ENCODE measurements at regions of chr3 and their contacts with region 1.

Region 1: DNA sequence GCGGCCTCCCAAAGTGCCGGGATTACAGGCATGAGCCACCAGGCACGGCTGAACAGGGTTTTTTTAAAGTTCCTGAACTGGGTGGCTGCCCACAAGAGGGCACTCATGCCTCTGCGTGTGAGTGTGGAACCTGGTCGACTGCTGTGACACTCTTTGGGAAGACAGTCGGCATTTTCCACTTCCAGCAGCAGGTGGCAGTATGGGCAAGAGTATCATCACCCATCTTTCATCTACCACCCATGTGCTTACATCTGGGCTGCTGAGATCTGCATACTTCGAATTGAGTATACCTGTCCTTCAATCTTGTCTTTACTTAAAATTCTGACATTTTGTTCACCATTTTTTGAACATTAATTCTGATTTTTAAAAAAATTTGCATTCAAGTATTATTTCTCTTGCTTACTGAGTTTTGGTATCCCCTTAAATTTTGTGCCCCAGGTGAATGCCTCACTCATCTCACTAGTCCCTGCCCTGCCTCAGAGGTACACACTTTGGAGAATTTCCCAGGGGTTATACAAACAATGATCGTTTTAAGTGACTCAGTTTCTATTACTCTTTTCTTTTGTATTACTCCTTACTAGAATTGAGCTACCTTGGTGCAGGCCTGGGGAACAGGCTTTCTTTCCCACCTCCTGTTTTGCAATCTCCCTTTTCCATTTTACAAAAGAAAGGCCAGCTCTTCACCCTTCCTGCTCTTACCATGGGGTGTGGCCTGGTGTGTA is 11.8 kb downstream of the CLEC3B start:
- DNase-seq: peak; percentile 96
- ATAC-seq: peak; percentile 82
- H3K4me3 Mint-ChIP-seq: no peak overlapping the region
- H3K27ac Mint-ChIP-seq: no peak overlapping the region
- H3K4me1 Mint-ChIP-seq: peaks cover 60% of the 10 kb centered on the region
- H3K27me3 Mint-ChIP-seq: peaks cover 7% of the 10 kb centered on the region

Region 2: DNA sequence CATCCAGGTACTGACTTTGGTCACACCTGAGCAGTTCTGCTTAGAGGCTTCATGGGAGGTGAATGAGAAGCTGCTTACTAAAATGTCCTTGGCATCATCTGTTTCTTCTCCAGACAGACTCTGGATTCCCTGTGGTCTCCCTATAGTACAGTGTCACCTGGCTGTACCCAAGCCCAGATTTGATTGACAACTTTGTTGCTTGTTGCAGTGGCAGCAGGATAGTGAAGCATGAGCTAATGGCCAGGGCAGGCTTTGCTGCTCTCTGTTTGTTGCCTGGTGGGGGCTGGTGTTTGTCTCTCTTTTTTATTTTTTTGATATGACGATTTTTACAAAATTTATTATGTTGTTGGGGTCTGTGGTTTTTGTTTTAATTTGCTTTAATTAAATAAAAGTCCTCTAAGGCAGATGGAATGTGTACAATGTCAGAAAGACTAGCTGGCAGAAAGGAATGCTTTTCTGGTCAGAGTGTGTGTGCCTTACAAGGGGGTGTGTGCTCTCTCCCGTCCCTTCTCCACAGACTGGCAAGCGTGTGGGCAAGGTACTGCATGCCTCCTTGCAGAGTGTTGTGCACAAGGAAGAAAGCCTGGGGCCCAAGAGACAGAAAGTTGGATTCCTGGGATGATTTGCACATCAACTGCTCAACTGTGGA is 27.1 kb before region 1 on chr3:
- CTCF ChIA-PET with region 1: interaction called, 10 read pairs
- POLR2A ChIA-PET with region 1: no interaction called
- DNase-seq: no peak
- ATAC-seq: no peak
- H3K4me3 Mint-ChIP-seq: no peak overlapping the region
- H3K27ac Mint-ChIP-seq: peak overlapping the region; percentile 48
- H3K4me1 Mint-ChIP-seq: peaks cover 6% of the 10 kb centered on the region
- H3K27me3 Mint-ChIP-seq: no peaks in the 10 kb centered on the region

Region 3: GRCh38 chr3:45021148-45021923 is 16.6 kb before region 1 on chr3:
- CTCF ChIA-PET with region 1: interaction called, 10 read pairs
- POLR2A ChIA-PET with region 1: no interaction called
- DNase-seq: no peak
- ATAC-seq: no peak
- H3K4me3 Mint-ChIP-seq: no peak overlapping the region
- H3K27ac Mint-ChIP-seq: peak overlapping the region; percentile 15
- H3K4me1 Mint-ChIP-seq: peaks cover 22% of the 10 kb centered on the region
- H3K27me3 Mint-ChIP-seq: no peaks in the 10 kb centered on the region

Region 4: GRCh38 chr3:45055411-45056143 is 17.7 kb after region 1 on chr3:
- CTCF ChIA-PET with region 1: interaction called, 76 read pairs
- POLR2A ChIA-PET with region 1: no interaction called
- DNase-seq: peak; percentile 49
- ATAC-seq: no peak
- H3K4me3 Mint-ChIP-seq: no peak overlapping the region
- H3K27ac Mint-ChIP-seq: no peak overlapping the region
- H3K4me1 Mint-ChIP-seq: peaks cover 19% of the 10 kb centered on the region
- H3K27me3 Mint-ChIP-seq: peaks cover 18% of the 10 kb centered on the region

Region 5: DNA sequence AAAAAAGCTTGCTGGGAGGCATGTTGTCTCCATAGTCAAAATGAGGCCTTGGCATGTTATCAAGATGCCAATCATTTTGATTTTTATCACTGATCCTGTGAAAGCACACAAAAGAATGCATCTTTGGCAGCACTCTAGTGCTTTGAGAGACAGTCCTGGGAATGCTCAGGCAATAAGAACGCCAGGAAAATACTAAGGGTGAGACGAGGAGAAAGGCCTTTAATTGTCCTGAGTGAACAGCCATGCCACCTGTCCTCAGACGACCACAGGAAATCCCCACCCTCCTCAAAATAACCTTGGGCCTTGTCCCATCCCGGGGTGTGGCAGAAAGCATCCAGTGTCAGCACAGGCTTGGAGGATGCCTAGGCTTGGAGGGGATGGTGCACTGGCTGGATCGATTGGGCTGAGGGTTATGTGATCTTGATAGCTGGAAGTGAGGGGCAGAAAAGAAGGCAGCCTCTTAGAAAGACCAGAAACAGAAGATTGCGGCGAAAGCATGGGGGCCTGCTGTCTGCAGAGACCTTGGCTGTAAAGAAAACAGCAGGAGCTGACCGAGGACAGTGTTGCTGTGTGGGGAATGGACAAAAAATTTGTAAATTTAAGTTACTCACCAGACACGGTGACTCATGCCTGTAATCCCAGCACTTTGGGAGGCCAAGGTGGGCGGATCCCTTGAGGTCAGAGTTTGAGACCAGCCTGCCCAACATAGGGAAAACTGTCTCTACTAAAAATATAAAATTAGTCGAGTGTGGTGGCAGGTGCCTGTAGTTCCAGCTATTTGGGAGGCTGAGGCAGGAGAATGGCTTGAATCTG is 180.9 kb after region 1 on chr3:
- CTCF ChIA-PET with region 1: interaction called, 386 read pairs
- POLR2A ChIA-PET with region 1: no interaction called
- DNase-seq: no peak
- ATAC-seq: no peak
- H3K4me3 Mint-ChIP-seq: no peak overlapping the region
- H3K27ac Mint-ChIP-seq: no peak overlapping the region
- H3K4me1 Mint-ChIP-seq: peaks cover 11% of the 10 kb centered on the region
- H3K27me3 Mint-ChIP-seq: peaks cover 51% of the 10 kb centered on the region

Region 6: DNA sequence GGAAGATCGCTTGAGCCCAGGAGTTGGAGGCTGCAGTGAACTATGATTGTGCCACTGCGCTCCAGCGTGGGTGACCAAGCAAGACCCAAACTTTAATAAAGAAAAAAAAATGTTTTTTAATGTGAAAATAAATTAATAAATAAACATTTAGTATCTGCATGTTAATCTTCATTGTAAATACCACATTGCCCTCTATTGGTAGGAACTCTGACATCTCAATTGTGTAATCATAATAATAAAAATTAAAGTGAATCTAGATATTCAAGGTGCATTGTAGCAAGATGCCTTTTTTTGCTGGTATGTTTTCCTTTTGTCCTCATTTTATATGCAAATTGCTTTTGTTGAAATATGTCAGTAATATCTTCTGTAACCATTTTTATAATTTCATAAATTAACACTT is 461.6 kb after region 1 on chr3:
- CTCF ChIA-PET with region 1: interaction called, 101 read pairs
- POLR2A ChIA-PET with region 1: no interaction called
- DNase-seq: no peak
- ATAC-seq: no peak
- H3K4me3 Mint-ChIP-seq: no peak overlapping the region
- H3K27ac Mint-ChIP-seq: no peak overlapping the region
- H3K4me1 Mint-ChIP-seq: peaks cover 23% of the 10 kb centered on the region
- H3K27me3 Mint-ChIP-seq: no peaks in the 10 kb centered on the region

Region 7: DNA sequence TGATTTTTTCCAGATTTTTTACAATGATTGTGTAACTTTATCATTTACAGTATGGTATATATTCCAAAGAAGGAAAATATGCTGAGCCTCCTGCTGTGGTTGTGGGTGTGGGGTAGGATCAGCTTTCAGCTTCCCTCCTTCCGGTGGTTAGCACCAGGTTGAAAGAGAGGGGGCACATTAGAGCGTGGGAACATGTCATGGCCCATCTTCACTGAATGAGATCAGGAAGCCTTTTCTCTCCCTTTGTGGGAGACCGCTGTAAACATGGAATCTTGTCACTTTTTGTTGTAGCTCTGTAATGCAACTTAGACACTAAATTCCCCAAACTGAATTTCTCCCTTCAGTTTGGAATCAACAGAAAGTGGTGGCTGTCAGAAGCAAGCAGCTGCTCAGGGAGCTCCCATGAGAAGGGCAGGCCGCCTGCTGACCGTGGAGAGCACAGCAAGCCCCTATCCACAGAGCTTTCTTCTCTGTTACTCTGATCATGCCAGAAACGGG is 470.0 kb after region 1 on chr3:
- CTCF ChIA-PET with region 1: interaction called, 101 read pairs
- POLR2A ChIA-PET with region 1: no interaction called
- DNase-seq: no peak
- ATAC-seq: peak; percentile 43
- H3K4me3 Mint-ChIP-seq: no peak overlapping the region
- H3K27ac Mint-ChIP-seq: no peak overlapping the region
- H3K4me1 Mint-ChIP-seq: peaks cover 2% of the 10 kb centered on the region
- H3K27me3 Mint-ChIP-seq: no peaks in the 10 kb centered on the region

Measured in activated CD8-positive, alpha-beta T cell treated with anti-CD3 and anti-CD28 coated beads, Interleukin-2, amount 10 ng/mL, durations not matched to agents 7 days and 5 days (primary cell).